ENCODE measurements at regions of chr1 and their contacts with region 1.

Region 1: GRCh38 chr1:154878371-154879022 is 8.4 kb upstream of the KCNN3 start:
- DNase-seq: peak; percentile 80
- ATAC-seq: peak; percentile 93
- H3K4me3 ChIP-seq: no peak overlapping the region
- H3K27ac ChIP-seq: no peak overlapping the region
- H3K4me1 ChIP-seq: peaks cover 9% of the 10 kb centered on the region
- H3K27me3 ChIP-seq: no peaks in the 10 kb centered on the region
- CTCF ChIP-seq: peak; percentile 97

Region 2: GRCh38 chr1:154765970-154766369 is 112.5 kb before region 1 on chr1:
- CTCF ChIA-PET with region 1: interaction called, 13 read pairs
- POLR2A ChIA-PET with region 1: no interaction called
- intact Hi-C with region 1: loop called (anchors 1 kb)
- DNase-seq: peak; percentile 66
- ATAC-seq: peak; percentile 98
- H3K4me3 ChIP-seq: no peak overlapping the region
- H3K27ac ChIP-seq: no peak overlapping the region
- H3K4me1 ChIP-seq: no peaks in the 10 kb centered on the region
- H3K27me3 ChIP-seq: peaks cover 48% of the 10 kb centered on the region
- CTCF ChIP-seq: peak; percentile 66

Region 3: GRCh38 chr1:154992721-154993571 is 114.4 kb after region 1 on chr1:
- CTCF ChIA-PET with region 1: no interaction called
- POLR2A ChIA-PET with region 1: no interaction called
- intact Hi-C with region 1: no loop called
- DNase-seq: peak; percentile 46
- ATAC-seq: peak; percentile 40
- H3K4me3 ChIP-seq: no peak overlapping the region
- H3K27ac ChIP-seq: no peak overlapping the region
- H3K4me1 ChIP-seq: no peaks in the 10 kb centered on the region
- H3K27me3 ChIP-seq: no peaks in the 10 kb centered on the region
- CTCF ChIP-seq: peak; percentile 47